ENCODE measurements at regions of chr1 and their contacts with region 1.

Region 1: GRCh38 chr1:204494281-204495077 is at the start of gene PIK3C2B:
- DNase-seq: peak; percentile 90
- ATAC-seq: peak; percentile 94 to 95
- total RNA-seq, gene PIK3C2B: 21.2 to 21.7 TPM

Region 2: GRCh38 chr1:204446370-204447111 is 47.9 kb before region 1 on chr1:
- intact Hi-C with region 1: loop called in 1 of 2 experiments (anchors 2 kb)
- DNase-seq: peak; percentile 79
- ATAC-seq: peak; percentile 72 to 73

Measured in left cardiac atrium (tissue), 4 donors.